ENCODE measurements at regions of chr18 and their contacts with region 1.

Region 1: DNA sequence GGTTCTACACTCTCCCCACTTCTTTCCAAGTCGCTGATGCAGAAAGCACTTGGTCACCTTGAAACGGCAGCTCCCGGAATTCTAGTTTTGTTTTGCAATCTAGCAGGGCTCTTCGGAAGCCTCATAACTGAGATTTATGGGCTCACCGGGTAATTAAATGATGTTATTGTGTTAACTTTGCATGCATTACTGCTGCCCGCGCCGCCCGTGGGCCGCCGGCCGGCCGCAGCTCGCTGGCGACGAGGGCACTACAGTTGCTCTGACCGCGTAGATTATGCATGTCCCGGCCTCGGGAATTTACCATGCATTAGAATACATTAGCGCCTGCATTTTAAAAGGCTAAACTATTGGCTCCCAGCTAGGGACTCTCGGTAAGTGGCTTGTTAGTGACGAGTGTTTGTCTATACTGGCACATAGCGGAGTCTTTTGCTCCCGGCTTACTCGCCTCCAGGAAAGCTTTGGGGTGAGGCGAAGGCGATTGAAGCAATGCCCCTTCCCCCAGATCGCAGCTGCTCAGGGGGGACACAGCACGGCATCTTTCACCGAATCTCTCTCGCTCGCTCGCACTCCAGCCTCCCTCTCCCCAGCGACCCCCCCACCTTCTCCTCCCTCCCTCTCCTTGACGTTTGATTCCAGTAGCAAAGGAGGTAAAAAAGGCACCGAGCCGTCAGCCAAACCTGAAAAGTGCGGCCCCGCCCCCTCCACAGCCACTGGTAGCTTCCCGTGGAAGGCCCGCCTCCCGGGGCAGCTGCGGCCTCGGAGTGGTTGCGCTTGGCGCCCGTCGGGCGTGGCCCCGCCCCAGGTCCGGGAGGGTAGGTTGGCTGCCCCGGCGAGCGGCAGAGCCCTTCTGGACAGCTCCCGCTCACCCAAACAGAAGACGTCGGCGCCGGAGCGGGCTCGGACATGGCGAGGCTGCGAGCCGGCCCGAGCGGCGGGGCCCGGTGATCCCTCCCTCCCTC is at the start of gene ONECUT2:
- DNase-seq: peak; percentile 80
- ATAC-seq: peak; percentile 97
- H3K4me3 ChIP-seq: peak within 1 kb of the TSS; percentile 52 to 73
- H3K27ac ChIP-seq: no peak within 1 kb of the TSS
- H3K4me1 ChIP-seq: peaks cover 18 to 33% of the 10 kb centered on the region in 2 experiments; a peak in 3 of 4 replicates
- H3K27me3 ChIP-seq: peaks cover 38% of the 10 kb centered on the region
- CTCF ChIP-seq: no peak
- POLR2A ChIP-seq: no peak
- RAD21 ChIP-seq: no peak
- total RNA-seq, gene ONECUT2: 4.3 TPM

Region 2: GRCh38 chr18:56869189-56869777 is 565.5 kb before region 1 on chr18:
- CTCF ChIA-PET with region 1: interaction called, 8 read pairs
- POLR2A ChIA-PET with region 1: no interaction called
- RAD21 ChIA-PET with region 1: no interaction called
- intact Hi-C with region 1: loop called (anchors 2 kb)
- DNase-seq: peak; percentile 55
- ATAC-seq: peak; percentile 75; the same call in 1 of the 2 replicates
- H3K4me3 ChIP-seq: no peak overlapping the region
- H3K27ac ChIP-seq: no peak overlapping the region
- H3K4me1 ChIP-seq: no peaks in the 10 kb centered on the region
- H3K27me3 ChIP-seq: no peaks in the 10 kb centered on the region
- CTCF ChIP-seq: peak; percentile 42 to 84 (median 69); a peak in 5 of 6 replicates
- POLR2A ChIP-seq: no peak
- RAD21 ChIP-seq: peak; percentile 66

Region 3: GRCh38 chr18:57209713-57210661 is 224.8 kb before region 1 on chr18:
- CTCF ChIA-PET with region 1: no interaction called
- POLR2A ChIA-PET with region 1: no interaction called
- RAD21 ChIA-PET with region 1: no interaction called
- intact Hi-C with region 1: loop called (anchors 5 kb)
- DNase-seq: peak; percentile 63
- ATAC-seq: peak; percentile 99
- H3K4me3 ChIP-seq: peak overlapping the region; percentile 13 to 48; a peak in 3 of 4 replicates
- H3K27ac ChIP-seq: peak overlapping the region; percentile 34
- H3K4me1 ChIP-seq: peaks cover 15 to 30% of the 10 kb centered on the region in 2 experiments
- H3K27me3 ChIP-seq: no peaks in the 10 kb centered on the region
- CTCF ChIP-seq: no peak
- POLR2A ChIP-seq: no peak
- RAD21 ChIP-seq: no peak